Naive thymus-derived CD4-positive, alpha-beta T cell (primary cell): ENCODE measurements at regions of chr11 and their contacts with region 1.

Region 1: GRCh38 chr11:117205211-117205818 is 6.1 kb downstream of the TAGLN start:
- DNase-seq: no peak
- ATAC-seq: no peak
- H3K4me3 ChIP-seq: no peak overlapping the region
- H3K4me3 Mint-ChIP-seq: no peak overlapping the region
- H3K27ac ChIP-seq: no peak overlapping the region
- H3K27ac Mint-ChIP-seq: peak overlapping the region in 3 of 9 donors; percentile 44 to 68 (median 64)
- H3K4me1 ChIP-seq: no peaks in the 10 kb centered on the region
- H3K4me1 Mint-ChIP-seq: peaks cover 0 to 5% (median 0%) of the 10 kb centered on the region in 7 donors
- H3K27me3 ChIP-seq: no peaks in the 10 kb centered on the region
- H3K27me3 Mint-ChIP-seq: no peaks in the 10 kb centered on the region

Region 2: GRCh38 chr11:116853461-116854073 is 351.7 kb before region 1 on chr11:
- CTCF ChIA-PET with region 1: no interaction called
- POLR2A ChIA-PET with region 1: no interaction called
- intact Hi-C with region 1: no loop called
- DNase-seq: peak in 8 of 9 donors; percentile 53 to 84 (median 77)
- ATAC-seq: peak; percentile 98
- H3K4me3 ChIP-seq: peak overlapping the region; percentile 38
- H3K4me3 Mint-ChIP-seq: peak overlapping the region; percentile 47 to 84 (median 70)
- H3K27ac ChIP-seq: peak overlapping the region; percentile 4
- H3K27ac Mint-ChIP-seq: peak overlapping the region; percentile 41 to 92 (median 81)
- H3K4me1 ChIP-seq: peaks cover 57 to 70% of the 10 kb centered on the region in 2 donors
- H3K4me1 Mint-ChIP-seq: peaks cover 52 to 78% (median 76%) of the 10 kb centered on the region in 7 donors
- H3K27me3 ChIP-seq: no peaks in the 10 kb centered on the region
- H3K27me3 Mint-ChIP-seq: no peaks in the 10 kb centered on the region

Region 3: GRCh38 chr11:117134431-117134830 is 70.9 kb before region 1 on chr11:
- CTCF ChIA-PET with region 1: no interaction called
- POLR2A ChIA-PET with region 1: no interaction called
- intact Hi-C with region 1: loop called in 1 of 2 experiments (anchors 5 kb)
- DNase-seq: no peak
- ATAC-seq: no peak
- H3K4me3 ChIP-seq: no peak overlapping the region
- H3K4me3 Mint-ChIP-seq: no peak overlapping the region
- H3K27ac ChIP-seq: no peak overlapping the region
- H3K27ac Mint-ChIP-seq: no peak overlapping the region
- H3K4me1 ChIP-seq: no peaks in the 10 kb centered on the region
- H3K4me1 Mint-ChIP-seq: peaks cover 0 to 3% (median 0%) of the 10 kb centered on the region in 7 donors
- H3K27me3 ChIP-seq: no peaks in the 10 kb centered on the region
- H3K27me3 Mint-ChIP-seq: peaks cover 0 to 4% (median 3%) of the 10 kb centered on the region in 5 donors

Region 4: DNA sequence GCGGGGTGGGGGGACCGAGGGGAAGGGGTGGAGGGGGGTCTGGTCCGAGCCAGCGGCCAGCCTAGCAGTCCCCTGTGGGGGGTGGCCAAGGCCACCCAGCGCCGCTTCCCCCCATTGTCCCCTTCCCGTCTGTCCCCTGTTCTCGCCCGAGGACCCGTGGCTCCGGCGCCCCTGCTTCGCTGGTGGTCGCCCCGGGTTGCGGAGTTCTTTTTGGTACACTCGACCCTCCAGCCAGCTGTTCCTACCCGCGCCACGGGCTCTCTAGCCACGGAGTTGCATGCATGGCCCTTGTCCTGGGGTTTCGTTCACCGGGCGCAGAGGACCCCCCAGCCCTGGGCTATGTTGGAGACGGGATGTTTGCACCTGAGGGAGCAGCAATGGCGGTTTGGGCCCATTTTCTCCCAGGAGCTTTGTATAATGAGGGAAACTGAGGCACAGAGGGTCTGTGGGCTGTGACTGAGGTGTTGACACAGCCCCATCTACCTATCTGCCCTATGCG is 27.6 kb after region 1 on chr11:
- CTCF ChIA-PET with region 1: no interaction called
- POLR2A ChIA-PET with region 1: no interaction called
- intact Hi-C with region 1: no loop called
- DNase-seq: peak in 1 of 9 donors; percentile 39
- ATAC-seq: no peak
- H3K4me3 ChIP-seq: peak overlapping the region; percentile 65
- H3K4me3 Mint-ChIP-seq: peak overlapping the region; percentile 80 to 91 (median 86)
- H3K27ac ChIP-seq: peak overlapping the region; percentile 97
- H3K27ac Mint-ChIP-seq: peak overlapping the region; percentile 84 to 96 (median 89)
- H3K4me1 ChIP-seq: peaks cover 32 to 33% of the 10 kb centered on the region in 2 donors
- H3K4me1 Mint-ChIP-seq: peaks cover 39 to 50% (median 47%) of the 10 kb centered on the region in 7 donors
- H3K27me3 ChIP-seq: no peaks in the 10 kb centered on the region
- H3K27me3 Mint-ChIP-seq: no peaks in the 10 kb centered on the region